ENCODE measurements at regions of chr4 and their contacts with region 1.

Region 1: GRCh38 chr4:14871676-14872430 is 130.4 kb upstream of the CPEB2 start:
- DNase-seq: peak in 1 of 2 experiments; percentile 4
- H3K4me3 ChIP-seq: no peak overlapping the region
- H3K4me3 Mint-ChIP-seq: no peak overlapping the region
- H3K27ac Mint-ChIP-seq: no peak overlapping the region
- H3K4me1 ChIP-seq: no peaks in the 10 kb centered on the region
- H3K4me1 Mint-ChIP-seq: no peaks in the 10 kb centered on the region
- H3K27me3 ChIP-seq: no peaks in the 10 kb centered on the region
- H3K27me3 Mint-ChIP-seq: no peaks in the 10 kb centered on the region
- CTCF ChIP-seq: peak in 1 of 2 experiments; percentile 23

Region 2: GRCh38 chr4:15162465-15163283 is 290.8 kb after region 1 on chr4:
- CTCF ChIA-PET with region 1: no interaction called
- POLR2A ChIA-PET with region 1: no interaction called
- intact Hi-C with region 1: loop called (anchors 10 kb)
- DNase-seq: no peak
- H3K4me3 ChIP-seq: no peak overlapping the region
- H3K4me3 Mint-ChIP-seq: no peak overlapping the region
- H3K27ac Mint-ChIP-seq: no peak overlapping the region
- H3K4me1 ChIP-seq: no peaks in the 10 kb centered on the region
- H3K4me1 Mint-ChIP-seq: peaks cover 7% of the 10 kb centered on the region
- H3K27me3 ChIP-seq: no peaks in the 10 kb centered on the region
- H3K27me3 Mint-ChIP-seq: peaks cover 6% of the 10 kb centered on the region
- CTCF ChIP-seq: peak; percentile 13 to 21